Ovary (tissue), 10 donors: ENCODE measurements at regions of chrX and their contacts with region 1.

Region 1: DNA sequence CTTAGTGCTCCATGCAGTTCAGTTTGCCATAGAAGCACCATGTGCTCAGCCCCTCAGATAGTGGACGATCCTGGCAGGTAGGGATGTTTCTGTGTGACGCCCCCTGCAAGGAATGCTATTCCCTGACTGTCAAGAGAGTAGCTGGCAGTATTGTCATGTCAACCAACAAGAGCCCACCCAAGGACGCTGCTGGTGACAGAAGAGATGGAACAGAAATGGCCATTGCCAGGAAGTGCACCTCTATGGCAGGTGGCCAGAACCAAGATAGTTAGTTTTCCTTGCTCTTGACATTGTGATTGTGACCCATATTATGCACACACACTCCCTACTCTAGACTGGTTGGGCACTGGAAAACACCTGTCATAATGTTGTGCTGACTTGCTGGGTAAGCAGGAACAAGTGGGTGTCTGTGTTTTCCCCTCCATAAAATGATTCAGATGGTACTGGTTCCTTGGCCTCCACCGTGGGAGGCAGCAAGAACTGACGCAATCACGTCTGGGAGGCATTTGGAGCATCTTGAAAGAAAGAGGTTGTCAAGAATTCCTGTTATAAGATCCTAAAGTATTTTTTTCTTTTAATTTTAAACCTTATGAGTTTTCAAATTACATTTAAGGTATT is 507.9 kb downstream of the MID1IP1 start:
- DNase-seq: peak; percentile 32 to 55 (median 44)
- H3K4me3 ChIP-seq: no peak overlapping the region
- H3K27ac ChIP-seq: peak overlapping the region in 1 of 2 donors; percentile 9
- H3K4me1 ChIP-seq: peaks cover 3% of the 10 kb centered on the region
- H3K27me3 ChIP-seq: no peaks in the 10 kb centered on the region
- CTCF ChIP-seq: no peak
- EP300 ChIP-seq: no peak
- POLR2A ChIP-seq: no peak

Region 2: DNA sequence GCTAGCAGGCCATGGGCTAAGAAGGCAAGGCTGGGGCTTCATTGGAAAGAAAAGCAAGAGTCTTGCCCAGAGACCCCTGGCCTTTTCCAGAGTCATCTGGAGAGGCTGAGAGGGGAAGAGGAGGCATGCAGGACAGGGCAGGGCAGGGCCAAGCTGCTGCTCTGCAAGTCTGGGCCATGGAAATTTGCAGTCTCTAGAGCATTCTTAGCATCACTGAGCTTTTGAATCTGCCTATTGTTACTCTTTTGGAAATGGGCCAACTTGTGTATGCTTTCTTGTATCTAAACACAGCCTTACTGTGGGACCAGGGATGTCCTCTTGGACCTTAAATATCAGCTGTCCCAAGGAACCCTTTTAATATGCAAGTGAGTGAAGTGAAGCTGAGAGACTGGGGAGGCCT is 52.6 kb after region 1 on chrX:
- intact Hi-C with region 1: loop called in 1 of 4 experiments (anchors 10 kb)
- DNase-seq: no peak
- H3K4me3 ChIP-seq: no peak overlapping the region
- H3K27ac ChIP-seq: no peak overlapping the region
- H3K4me1 ChIP-seq: no peaks in the 10 kb centered on the region
- H3K27me3 ChIP-seq: no peaks in the 10 kb centered on the region
- CTCF ChIP-seq: no peak
- EP300 ChIP-seq: no peak
- POLR2A ChIP-seq: no peak